KBM-7 (cell line): ENCODE measurements at regions of chr20 and their contacts with region 1.

Region 1: GRCh38 chr20:956330-956951 is 40.3 kb upstream of the ANGPT4 start:
- DNase-seq: peak; percentile 80

Region 2: GRCh38 chr20:699811-700338 is 256.6 kb before region 1 on chr20:
- in situ Hi-C with region 1: no loop called
- DNase-seq: no peak

Region 3: GRCh38 chr20:815914-816606 is 140.4 kb before region 1 on chr20:
- in situ Hi-C with region 1: loop called (anchors 10 kb)
- DNase-seq: peak; percentile 77